PC-9 (cell line): ENCODE measurements at regions of chr17 and their contacts with region 1.

Region 1: GRCh38 chr17:27721797-27722196 is 78.5 kb downstream of the NOS2 start:
- DNase-seq: no peak
- H3K4me3 ChIP-seq: no peak overlapping the region
- H3K27ac ChIP-seq: no peak overlapping the region
- H3K4me1 ChIP-seq: no peaks in the 10 kb centered on the region
- H3K27me3 ChIP-seq: peaks cover 29% of the 10 kb centered on the region
- CTCF ChIP-seq: no peak

Region 2: DNA sequence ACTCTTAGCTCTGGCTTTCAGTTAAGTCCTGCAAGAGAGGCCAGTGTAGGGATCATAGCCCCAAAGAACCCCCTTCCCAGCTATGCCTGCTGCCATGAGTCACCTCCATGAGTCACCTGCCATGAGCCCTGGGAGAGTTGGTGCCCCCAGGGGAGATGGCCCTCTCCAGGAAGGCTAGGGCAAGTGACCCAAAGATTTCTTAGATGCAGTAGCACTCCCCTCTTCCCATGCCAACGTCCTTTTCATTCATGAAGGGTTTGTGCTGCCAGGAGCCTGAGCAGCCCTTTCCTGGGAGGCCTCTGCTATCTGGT is 169.4 kb before region 1 on chr17:
- CTCF ChIA-PET with region 1: no interaction called
- POLR2A ChIA-PET with region 1: no interaction called
- intact Hi-C with region 1: no loop called
- DNase-seq: peak; percentile 94 to 96
- H3K4me3 ChIP-seq: peak overlapping the region; percentile 12; the same call in 1 of the 2 replicates
- H3K27ac ChIP-seq: peak overlapping the region; percentile 86
- H3K4me1 ChIP-seq: peaks cover 44% of the 10 kb centered on the region
- H3K27me3 ChIP-seq: no peaks in the 10 kb centered on the region
- CTCF ChIP-seq: no peak

Region 3: DNA sequence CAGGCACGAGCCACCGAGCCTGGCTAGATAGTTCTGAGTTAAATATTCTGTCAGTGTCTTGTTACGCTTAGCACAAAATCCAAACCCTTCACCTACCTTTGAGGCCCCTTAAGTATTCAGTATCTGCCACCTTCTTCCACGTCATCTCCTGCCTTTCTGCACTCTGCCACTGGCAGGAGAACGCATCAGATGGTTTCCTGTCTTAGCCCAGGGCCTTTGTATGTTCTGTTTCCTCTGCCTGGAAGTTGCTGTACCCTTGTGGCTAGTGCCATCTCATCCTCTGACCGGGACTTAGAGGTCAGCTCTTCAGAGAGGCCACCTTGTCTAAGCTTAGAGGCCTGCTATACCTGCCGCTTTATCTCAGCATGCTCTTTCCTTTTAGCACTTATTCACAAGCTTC is 158.3 kb before region 1 on chr17:
- CTCF ChIA-PET with region 1: interaction called, 15 read pairs
- POLR2A ChIA-PET with region 1: no interaction called
- intact Hi-C with region 1: no loop called
- DNase-seq: no peak
- H3K4me3 ChIP-seq: no peak overlapping the region
- H3K27ac ChIP-seq: no peak overlapping the region
- H3K4me1 ChIP-seq: no peaks in the 10 kb centered on the region
- H3K27me3 ChIP-seq: no peaks in the 10 kb centered on the region
- CTCF ChIP-seq: no peak

Region 4: DNA sequence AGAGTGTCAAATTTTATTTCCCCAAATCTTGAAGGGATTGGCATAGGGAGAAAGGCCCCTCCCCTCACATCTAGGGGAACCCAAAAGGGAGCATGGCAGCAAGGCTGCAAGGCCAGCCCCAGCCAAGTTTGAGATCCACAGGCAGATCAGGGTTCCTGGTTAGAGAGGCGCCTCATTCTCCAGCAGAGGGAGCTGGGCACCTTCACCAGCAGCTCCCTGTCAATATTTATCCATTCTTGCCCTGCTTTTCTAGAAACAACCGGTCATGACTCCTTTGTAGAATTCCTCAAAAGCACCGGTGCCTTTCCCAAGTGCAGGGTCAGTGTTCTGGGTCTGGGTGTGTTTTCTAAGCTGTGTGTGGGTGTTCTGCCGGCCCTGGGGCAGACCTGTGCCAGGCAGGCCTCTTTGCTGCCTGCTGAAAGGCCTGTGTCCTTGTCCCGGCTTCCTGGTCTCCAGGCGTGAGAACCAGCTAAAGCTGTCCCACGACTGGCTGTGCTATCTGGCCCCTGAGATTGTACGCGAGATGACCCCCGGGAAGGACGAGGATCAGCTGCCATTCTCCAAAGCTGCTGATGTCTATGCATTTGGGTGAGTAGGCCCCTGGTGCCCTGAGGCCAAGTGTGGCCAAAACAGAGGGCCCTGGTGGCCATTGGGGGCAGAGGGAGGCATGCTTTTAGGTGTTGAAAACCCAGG is 112.0 kb before region 1 on chr17:
- CTCF ChIA-PET with region 1: no interaction called
- POLR2A ChIA-PET with region 1: no interaction called
- intact Hi-C with region 1: no loop called
- DNase-seq: peak in 1 of 2 experiments; percentile 25
- H3K4me3 ChIP-seq: no peak overlapping the region
- H3K27ac ChIP-seq: no peak overlapping the region
- H3K4me1 ChIP-seq: peaks cover 1% of the 10 kb centered on the region
- H3K27me3 ChIP-seq: no peaks in the 10 kb centered on the region
- CTCF ChIP-seq: peak; percentile 69